Caco-2 (cell line): ENCODE measurements at regions of chr4 and their contacts with region 1.

Region 1: DNA sequence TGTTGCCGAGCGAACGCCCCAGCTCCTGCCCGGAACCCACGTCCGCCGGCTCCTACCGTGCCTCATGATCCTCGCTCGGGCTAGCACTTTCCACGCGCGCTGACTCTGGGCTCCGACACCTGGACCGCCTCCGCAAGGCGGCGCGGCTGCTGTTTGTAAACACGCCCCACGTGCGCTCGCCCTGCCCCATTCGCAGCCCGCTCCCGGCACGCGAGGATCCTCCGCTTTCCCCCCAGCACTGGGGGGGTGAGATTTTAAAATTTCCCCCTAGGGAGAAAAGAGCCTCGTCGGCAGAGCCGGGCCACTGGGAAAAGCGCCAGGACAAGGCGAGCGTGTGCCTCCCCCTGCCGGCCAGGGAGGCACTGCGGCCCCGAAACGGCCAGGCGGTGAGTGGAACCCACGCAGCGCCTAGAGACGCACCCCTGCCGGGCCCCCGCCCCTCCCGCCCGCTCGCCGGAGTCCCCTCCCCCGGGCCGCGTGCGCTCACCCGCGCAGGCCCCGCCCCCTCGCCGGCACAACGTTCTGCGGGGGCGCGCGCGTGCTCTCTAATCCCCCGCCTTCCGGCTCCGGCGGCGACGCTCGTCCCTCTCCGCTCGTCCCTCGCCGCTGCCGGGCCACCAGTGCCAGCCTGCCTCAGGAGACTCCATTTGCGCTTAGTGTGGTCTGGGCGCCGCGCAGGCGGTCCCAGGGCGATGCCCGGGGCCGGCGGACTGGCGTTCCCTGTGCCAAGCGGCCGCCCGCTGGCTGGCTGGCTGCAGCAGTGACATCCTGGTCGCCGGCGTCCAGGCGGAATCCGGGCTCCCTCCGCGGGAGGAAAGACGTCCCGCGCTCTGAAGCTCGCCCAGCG is at the start of gene TIGD2:
- DNase-seq: peak; percentile 86 to 91
- H3K4me3 ChIP-seq: peak within 1 kb of the TSS; percentile 86
- H3K4me3 Mint-ChIP-seq: peak within 1 kb of the TSS; percentile 98
- H3K27ac Mint-ChIP-seq: peak within 1 kb of the TSS; percentile 96
- H3K4me1 ChIP-seq: peaks cover 13% of the 10 kb centered on the region
- H3K4me1 Mint-ChIP-seq: peaks cover 31% of the 10 kb centered on the region
- H3K27me3 ChIP-seq: no peaks in the 10 kb centered on the region
- H3K27me3 Mint-ChIP-seq: no peaks in the 10 kb centered on the region
- CTCF ChIP-seq: peak; percentile 69 to 84
- total RNA-seq, gene TIGD2: 25.4 and 26.1 TPM in 2 replicates

Region 2: GRCh38 chr4:88823058-88823919 is 287.9 kb before region 1 on chr4:
- CTCF ChIA-PET with region 1: no interaction called
- POLR2A ChIA-PET with region 1: no interaction called
- intact Hi-C with region 1: loop called (anchors 1 kb)
- DNase-seq: peak; percentile 79 to 85
- H3K4me3 ChIP-seq: peak overlapping the region; percentile 41
- H3K4me3 Mint-ChIP-seq: peak overlapping the region; percentile 71
- H3K27ac Mint-ChIP-seq: peak overlapping the region; percentile 51
- H3K4me1 ChIP-seq: no peaks in the 10 kb centered on the region; the same call in 1 of the 2 replicates
- H3K4me1 Mint-ChIP-seq: no peaks in the 10 kb centered on the region
- H3K27me3 ChIP-seq: no peaks in the 10 kb centered on the region
- H3K27me3 Mint-ChIP-seq: no peaks in the 10 kb centered on the region
- CTCF ChIP-seq: no peak

Region 3: DNA sequence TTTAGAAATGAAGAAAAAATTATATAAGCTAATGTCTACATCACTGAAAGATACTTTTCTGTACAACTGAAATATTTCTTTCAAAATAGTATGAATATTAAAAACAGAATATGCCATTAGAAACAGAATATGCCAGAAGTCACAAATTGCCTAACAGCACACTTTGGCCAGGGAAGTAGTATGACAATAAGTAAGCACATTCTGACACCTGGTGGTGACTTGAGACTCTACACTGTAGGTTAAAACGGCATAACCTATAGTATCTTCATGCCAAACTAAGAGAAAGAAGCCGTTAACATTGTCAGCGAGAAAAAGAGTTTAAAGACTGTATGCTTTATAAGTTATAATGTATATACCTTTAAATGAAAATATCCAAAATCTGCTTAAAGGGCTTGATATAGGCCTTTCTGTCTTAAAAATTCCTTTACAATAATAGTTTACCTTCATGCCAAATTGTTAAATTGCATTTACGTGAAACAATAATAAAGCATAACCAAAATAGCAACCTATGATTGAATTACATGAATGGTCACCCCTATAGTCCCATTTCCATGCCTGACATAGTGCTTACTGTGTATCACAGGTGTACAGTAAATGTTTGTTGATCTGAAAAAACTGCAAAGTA is 87.0 kb before region 1 on chr4:
- CTCF ChIA-PET with region 1: no interaction called
- POLR2A ChIA-PET with region 1: no interaction called
- intact Hi-C with region 1: loop called (anchors 2 kb)
- DNase-seq: peak; percentile 54 to 64
- H3K4me3 ChIP-seq: no peak overlapping the region
- H3K4me3 Mint-ChIP-seq: no peak overlapping the region
- H3K27ac Mint-ChIP-seq: no peak overlapping the region
- H3K4me1 ChIP-seq: peaks cover 13% of the 10 kb centered on the region
- H3K4me1 Mint-ChIP-seq: peaks cover 17% of the 10 kb centered on the region
- H3K27me3 ChIP-seq: no peaks in the 10 kb centered on the region
- H3K27me3 Mint-ChIP-seq: no peaks in the 10 kb centered on the region
- CTCF ChIP-seq: peak; percentile 63 to 82

Region 4: GRCh38 chr4:89056953-89057398 is 54.2 kb before region 1 on chr4 and contains the start of gene FAM13A:
- CTCF ChIA-PET with region 1: no interaction called
- POLR2A ChIA-PET with region 1: no interaction called
- intact Hi-C with region 1: loop called (anchors 5 kb)
- DNase-seq: peak; percentile 70 to 73
- H3K4me3 ChIP-seq: peak within 1 kb of the TSS; percentile 36
- H3K4me3 Mint-ChIP-seq: peak within 1 kb of the TSS; percentile 77
- H3K27ac Mint-ChIP-seq: peak within 1 kb of the TSS; percentile 51
- H3K4me1 ChIP-seq: peaks cover 15% of the 10 kb centered on the region
- H3K4me1 Mint-ChIP-seq: peaks cover 31% of the 10 kb centered on the region
- H3K27me3 ChIP-seq: no peaks in the 10 kb centered on the region
- H3K27me3 Mint-ChIP-seq: no peaks in the 10 kb centered on the region
- CTCF ChIP-seq: no peak
- total RNA-seq, gene FAM13A: 10.3 and 11.0 TPM in 2 replicates

Region 5: GRCh38 chr4:89123451-89123851 is 12.2 kb after region 1 on chr4:
- CTCF ChIA-PET with region 1: no interaction called
- POLR2A ChIA-PET with region 1: interaction called, 11 read pairs
- intact Hi-C with region 1: loop called (anchors 1 kb)
- DNase-seq: peak in 1 of 2 experiments; percentile 60
- H3K4me3 ChIP-seq: no peak overlapping the region
- H3K4me3 Mint-ChIP-seq: peak overlapping the region; percentile 86
- H3K27ac Mint-ChIP-seq: peak overlapping the region; percentile 98
- H3K4me1 ChIP-seq: peaks cover 68% of the 10 kb centered on the region
- H3K4me1 Mint-ChIP-seq: peaks cover 64% of the 10 kb centered on the region
- H3K27me3 ChIP-seq: no peaks in the 10 kb centered on the region
- H3K27me3 Mint-ChIP-seq: no peaks in the 10 kb centered on the region
- CTCF ChIP-seq: no peak

Region 6: GRCh38 chr4:89129080-89129640 is 18.0 kb after region 1 on chr4:
- CTCF ChIA-PET with region 1: no interaction called
- POLR2A ChIA-PET with region 1: no interaction called
- intact Hi-C with region 1: loop called (anchors 2 kb)
- DNase-seq: peak in 1 of 2 experiments; percentile 49
- H3K4me3 ChIP-seq: no peak overlapping the region
- H3K4me3 Mint-ChIP-seq: peak overlapping the region; percentile 31
- H3K27ac Mint-ChIP-seq: peak overlapping the region; percentile 70
- H3K4me1 ChIP-seq: peaks cover 52% of the 10 kb centered on the region
- H3K4me1 Mint-ChIP-seq: peaks cover 55% of the 10 kb centered on the region
- H3K27me3 ChIP-seq: no peaks in the 10 kb centered on the region
- H3K27me3 Mint-ChIP-seq: no peaks in the 10 kb centered on the region
- CTCF ChIP-seq: no peak

Region 7: GRCh38 chr4:89158884-89159503 is 47.8 kb after region 1 on chr4:
- CTCF ChIA-PET with region 1: no interaction called
- POLR2A ChIA-PET with region 1: no interaction called
- intact Hi-C with region 1: loop called (anchors 2 kb)
- DNase-seq: peak in 1 of 2 experiments; percentile 41
- H3K4me3 ChIP-seq: no peak overlapping the region
- H3K4me3 Mint-ChIP-seq: no peak overlapping the region
- H3K27ac Mint-ChIP-seq: no peak overlapping the region
- H3K4me1 ChIP-seq: no peaks in the 10 kb centered on the region
- H3K4me1 Mint-ChIP-seq: peaks cover 6% of the 10 kb centered on the region
- H3K27me3 ChIP-seq: no peaks in the 10 kb centered on the region
- H3K27me3 Mint-ChIP-seq: no peaks in the 10 kb centered on the region
- CTCF ChIP-seq: peak; percentile 64 to 69